ENCODE measurements at regions of chr9 and their contacts with region 1.

Region 1: DNA sequence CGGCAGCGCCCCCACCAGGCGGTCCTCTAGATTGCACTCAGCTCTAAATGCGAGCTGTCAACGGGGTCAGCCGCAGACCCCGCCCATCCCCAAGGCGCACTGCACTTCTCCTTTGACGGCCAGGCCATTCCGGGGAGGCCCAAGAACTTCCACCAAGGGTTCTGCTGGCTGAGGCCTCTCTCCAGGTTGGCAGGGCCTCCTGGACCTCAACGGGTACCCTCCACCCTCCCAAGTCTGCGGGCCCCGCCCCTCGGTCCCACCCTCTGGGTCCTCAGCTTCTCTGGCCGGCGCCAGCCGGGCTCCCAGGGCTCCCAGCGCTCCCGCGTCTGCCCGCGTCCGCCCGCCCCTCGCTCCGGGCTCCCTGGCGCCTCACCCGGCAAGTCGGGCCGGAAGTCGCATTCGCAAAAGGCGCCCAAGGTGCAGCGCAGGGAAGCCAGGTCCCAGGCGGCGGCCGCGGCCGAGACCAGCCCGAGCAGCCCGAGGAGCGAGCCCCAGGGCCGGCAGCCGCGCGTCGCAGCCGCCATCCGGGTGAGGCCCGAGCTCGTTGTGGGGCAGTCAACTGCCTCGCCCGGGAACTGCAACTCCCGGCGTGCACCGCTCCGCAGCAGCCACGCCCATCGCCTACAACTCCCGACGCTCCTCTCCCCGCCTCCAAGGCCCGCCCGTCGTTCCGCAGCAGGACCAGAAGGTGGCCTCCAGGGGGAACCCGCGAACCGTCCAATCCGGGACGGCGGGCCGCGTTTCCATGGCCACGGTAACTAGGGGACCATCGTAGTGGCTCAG is at the start of gene TOR2A:
- DNase-seq: peak; percentile 97 to 100 (median 98)
- ATAC-seq: peak; percentile 93
- H3K4me3 ChIP-seq: peak within 1 kb of the TSS; percentile 61
- H3K4me3 Mint-ChIP-seq: peak within 1 kb of the TSS; percentile 99
- H3K27ac ChIP-seq: peak within 1 kb of the TSS; percentile 73 to 75
- H3K27ac Mint-ChIP-seq: peak within 1 kb of the TSS; percentile 83
- H3K4me1 ChIP-seq: peaks cover 22% of the 10 kb centered on the region
- H3K4me1 Mint-ChIP-seq: peaks cover 16% of the 10 kb centered on the region
- H3K27me3 ChIP-seq: no peaks in the 10 kb centered on the region
- H3K27me3 Mint-ChIP-seq: no peaks in the 10 kb centered on the region
- CTCF ChIP-seq: peak; percentile 81
- total RNA-seq, gene TOR2A: 7.6 to 8.2 TPM

Region 2: GRCh38 chr9:127503947-127504782 is 230.8 kb before region 1 on chr9:
- CTCF ChIA-PET with region 1: interaction called, 8 read pairs
- POLR2A ChIA-PET with region 1: no interaction called
- intact Hi-C with region 1: loop called (anchors 1 kb)
- DNase-seq: peak; percentile 70 to 89 (median 78)
- ATAC-seq: peak; percentile 93
- H3K4me3 ChIP-seq: no peak overlapping the region
- H3K4me3 Mint-ChIP-seq: no peak overlapping the region
- H3K27ac ChIP-seq: no peak overlapping the region
- H3K27ac Mint-ChIP-seq: no peak overlapping the region
- H3K4me1 ChIP-seq: peaks cover 3% of the 10 kb centered on the region
- H3K4me1 Mint-ChIP-seq: peaks cover 4% of the 10 kb centered on the region
- H3K27me3 ChIP-seq: no peaks in the 10 kb centered on the region
- H3K27me3 Mint-ChIP-seq: no peaks in the 10 kb centered on the region
- CTCF ChIP-seq: peak; percentile 88

Region 3: GRCh38 chr9:127715394-127716337 is 19.3 kb before region 1 on chr9 and contains the starts of genes PTRH1 and TTC16:
- CTCF ChIA-PET with region 1: interaction called, 28 read pairs
- POLR2A ChIA-PET with region 1: interaction called, 16 read pairs
- intact Hi-C with region 1: loop called in 1 of 2 experiments (anchors 2 kb)
- DNase-seq: peak; percentile 92 to 98 (median 96)
- ATAC-seq: peak; percentile 94
- H3K4me3 ChIP-seq: peak within 1 kb of the TSS; percentile 73
- H3K4me3 Mint-ChIP-seq: peak within 1 kb of the TSS; percentile 92
- H3K27ac ChIP-seq: peak within 1 kb of the TSS; percentile 51 to 76
- H3K27ac Mint-ChIP-seq: peak within 1 kb of the TSS; percentile 83
- H3K4me1 ChIP-seq: peaks cover 59% of the 10 kb centered on the region
- H3K4me1 Mint-ChIP-seq: peaks cover 30% of the 10 kb centered on the region
- H3K27me3 ChIP-seq: no peaks in the 10 kb centered on the region
- H3K27me3 Mint-ChIP-seq: no peaks in the 10 kb centered on the region
- CTCF ChIP-seq: no peak
- total RNA-seq, gene PTRH1: 4.5 to 5.9 TPM
- total RNA-seq, gene TTC16: 1.6 to 2.1 TPM

Region 4: DNA sequence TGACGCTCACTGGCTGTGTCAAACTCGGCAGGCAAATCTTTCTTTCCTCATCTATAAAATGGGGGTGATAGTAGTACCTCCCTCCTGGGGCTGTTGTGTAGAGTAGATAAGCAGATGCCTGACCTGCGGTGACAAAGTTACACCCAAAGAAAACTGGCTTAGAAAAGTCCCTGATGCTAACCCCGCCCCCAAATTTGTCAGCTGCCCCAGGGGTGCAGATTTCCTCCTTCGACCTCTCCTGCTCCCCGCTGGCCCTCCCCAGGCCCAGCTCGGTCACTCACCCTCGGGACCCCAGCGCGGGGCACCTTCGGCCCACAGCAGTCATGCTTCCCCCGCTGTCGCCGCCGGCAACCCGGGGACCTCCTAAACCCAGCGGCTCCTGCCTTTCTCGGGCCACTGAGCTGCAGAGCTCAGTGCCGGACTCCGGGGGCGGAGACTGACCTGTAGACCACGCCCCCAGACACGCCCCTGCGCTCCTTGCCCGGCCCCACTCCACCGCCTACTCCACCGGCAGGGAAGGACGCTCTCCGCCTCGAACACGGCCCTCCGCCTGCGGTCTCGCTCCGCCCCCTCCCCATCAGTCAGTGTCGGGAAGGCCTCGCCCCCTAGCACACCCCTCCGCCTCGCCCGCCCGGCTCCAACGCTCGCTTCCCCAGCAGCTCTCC is 36.1 kb after region 1 on chr9:
- CTCF ChIA-PET with region 1: interaction called, 13 read pairs
- POLR2A ChIA-PET with region 1: interaction called, 15 read pairs
- intact Hi-C with region 1: loop called (anchors 1 kb)
- DNase-seq: peak; percentile 87 to 98 (median 97)
- ATAC-seq: peak; percentile 80
- H3K4me3 ChIP-seq: peak overlapping the region; percentile 69
- H3K4me3 Mint-ChIP-seq: peak overlapping the region; percentile 90
- H3K27ac ChIP-seq: peak overlapping the region; percentile 90 to 91
- H3K27ac Mint-ChIP-seq: peak overlapping the region; percentile 97
- H3K4me1 ChIP-seq: peaks cover 86% of the 10 kb centered on the region
- H3K4me1 Mint-ChIP-seq: peaks cover 69% of the 10 kb centered on the region
- H3K27me3 ChIP-seq: no peaks in the 10 kb centered on the region
- H3K27me3 Mint-ChIP-seq: no peaks in the 10 kb centered on the region
- CTCF ChIP-seq: no peak

Region 5: GRCh38 chr9:127869310-127870152 is 134.6 kb after region 1 on chr9:
- CTCF ChIA-PET with region 1: interaction called, 20 read pairs
- POLR2A ChIA-PET with region 1: interaction called, 9 read pairs
- intact Hi-C with region 1: loop called in 1 of 2 experiments (anchors 1 kb)
- DNase-seq: peak; percentile 52 to 88 (median 71)
- ATAC-seq: peak; percentile 62
- H3K4me3 ChIP-seq: no peak overlapping the region
- H3K4me3 Mint-ChIP-seq: no peak overlapping the region
- H3K27ac ChIP-seq: no peak overlapping the region
- H3K27ac Mint-ChIP-seq: no peak overlapping the region
- H3K4me1 ChIP-seq: peaks cover 23% of the 10 kb centered on the region
- H3K4me1 Mint-ChIP-seq: peaks cover 19% of the 10 kb centered on the region
- H3K27me3 ChIP-seq: no peaks in the 10 kb centered on the region
- H3K27me3 Mint-ChIP-seq: no peaks in the 10 kb centered on the region
- CTCF ChIP-seq: peak; percentile 99